ENCODE measurements at regions of chr1 and their contacts with region 1.

Region 1: GRCh38 chr1:21344750-21345443 is 54.6 kb upstream of the ECE1 start:
- DNase-seq: peak in 1 of 2 experiments; percentile 25
- H3K4me3 ChIP-seq: peak overlapping the region; percentile 84
- H3K4me3 Mint-ChIP-seq: no peak overlapping the region
- H3K27ac Mint-ChIP-seq: no peak overlapping the region
- H3K4me1 ChIP-seq: no peaks in the 10 kb centered on the region
- H3K4me1 Mint-ChIP-seq: peaks cover 13% of the 10 kb centered on the region
- H3K27me3 ChIP-seq: no peaks in the 10 kb centered on the region
- H3K27me3 Mint-ChIP-seq: no peaks in the 10 kb centered on the region
- CTCF ChIP-seq: no peak

Region 2: DNA sequence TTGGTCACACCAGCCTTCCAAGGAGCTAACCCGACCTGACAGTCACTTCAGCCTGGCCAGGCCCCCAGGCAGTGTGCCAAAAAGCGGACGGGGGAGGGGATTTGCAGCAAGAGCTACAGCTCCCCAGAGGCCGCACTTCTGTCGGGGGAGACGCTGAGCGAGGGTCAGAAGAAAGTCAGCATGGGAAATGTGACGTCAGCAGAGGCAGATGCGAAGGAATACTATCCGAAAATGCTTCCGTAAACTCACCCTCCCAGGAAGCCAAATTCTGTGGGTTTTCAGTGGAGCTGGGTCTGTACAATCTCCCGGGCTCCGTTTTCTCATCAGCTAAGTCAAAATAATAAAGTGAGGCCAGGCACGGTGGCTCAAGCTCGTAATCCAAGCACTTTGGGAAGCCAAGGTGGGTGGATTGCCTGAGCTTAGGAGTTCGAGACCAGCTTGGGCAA is 26.2 kb before region 1 on chr1:
- CTCF ChIA-PET with region 1: no interaction called
- POLR2A ChIA-PET with region 1: no interaction called
- intact Hi-C with region 1: no loop called
- DNase-seq: no peak
- H3K4me3 ChIP-seq: no peak overlapping the region
- H3K4me3 Mint-ChIP-seq: no peak overlapping the region
- H3K27ac Mint-ChIP-seq: no peak overlapping the region
- H3K4me1 ChIP-seq: peaks cover 26% of the 10 kb centered on the region
- H3K4me1 Mint-ChIP-seq: peaks cover 23% of the 10 kb centered on the region
- H3K27me3 ChIP-seq: no peaks in the 10 kb centered on the region
- H3K27me3 Mint-ChIP-seq: no peaks in the 10 kb centered on the region
- CTCF ChIP-seq: no peak

Region 3: GRCh38 chr1:21329209-21329844 is 15.6 kb before region 1 on chr1:
- CTCF ChIA-PET with region 1: no interaction called
- POLR2A ChIA-PET with region 1: no interaction called
- intact Hi-C with region 1: loop called (anchors 1 kb)
- DNase-seq: peak; percentile 74 to 82
- H3K4me3 ChIP-seq: no peak overlapping the region
- H3K4me3 Mint-ChIP-seq: peak overlapping the region; percentile 37
- H3K27ac Mint-ChIP-seq: peak overlapping the region; percentile 80
- H3K4me1 ChIP-seq: peaks cover 24% of the 10 kb centered on the region
- H3K4me1 Mint-ChIP-seq: peaks cover 17% of the 10 kb centered on the region
- H3K27me3 ChIP-seq: no peaks in the 10 kb centered on the region
- H3K27me3 Mint-ChIP-seq: no peaks in the 10 kb centered on the region
- CTCF ChIP-seq: no peak

Region 4: DNA sequence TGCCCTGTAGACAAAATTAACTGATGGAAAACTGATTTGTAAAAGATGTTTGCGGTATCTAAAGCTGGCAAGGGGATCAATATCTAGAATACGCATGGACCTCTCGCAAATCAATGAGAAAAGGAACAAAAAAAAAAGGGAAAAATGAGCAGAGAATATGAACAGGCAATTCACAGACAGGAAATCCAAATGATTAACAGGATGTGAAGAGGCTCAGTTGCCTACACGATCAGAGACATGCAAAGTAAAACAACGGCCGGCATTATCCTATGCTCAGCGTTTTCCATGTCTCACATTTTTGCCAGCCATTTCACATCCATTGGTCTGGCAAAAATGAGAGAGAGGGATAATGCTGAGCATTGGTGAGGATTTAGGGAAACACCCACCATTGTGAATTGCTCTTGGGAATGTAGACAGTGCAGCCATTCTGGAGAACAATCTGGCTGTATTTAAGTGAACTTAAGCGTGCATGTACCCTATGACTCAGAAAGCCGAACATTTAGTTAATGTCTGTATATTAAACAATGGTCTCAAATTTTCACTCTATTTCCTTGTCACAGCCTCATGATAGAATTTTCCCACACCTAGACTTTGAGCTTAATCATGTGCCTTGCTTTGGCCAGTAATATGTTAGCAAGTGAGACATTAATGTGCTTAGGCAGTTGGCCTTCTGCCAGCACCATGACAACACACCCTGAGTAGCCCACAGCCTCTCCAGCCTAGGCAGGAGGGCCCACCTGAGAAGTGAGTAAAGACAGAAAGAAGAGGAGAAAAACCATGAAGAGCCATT is 34.0 kb after region 1 on chr1:
- CTCF ChIA-PET with region 1: no interaction called
- POLR2A ChIA-PET with region 1: no interaction called
- intact Hi-C with region 1: no loop called
- DNase-seq: no peak
- H3K4me3 ChIP-seq: no peak overlapping the region
- H3K4me3 Mint-ChIP-seq: no peak overlapping the region
- H3K27ac Mint-ChIP-seq: no peak overlapping the region
- H3K4me1 ChIP-seq: no peaks in the 10 kb centered on the region
- H3K4me1 Mint-ChIP-seq: no peaks in the 10 kb centered on the region
- H3K27me3 ChIP-seq: no peaks in the 10 kb centered on the region
- H3K27me3 Mint-ChIP-seq: no peaks in the 10 kb centered on the region
- CTCF ChIP-seq: no peak

Measured in Caco-2 (cell line).